Calu3 (cell line): ENCODE measurements at regions of chr5 and their contacts with region 1.

Region 1: GRCh38 chr5:151924564-151925301 is at the start of gene GLRA1:
- DNase-seq: peak; percentile 49
- H3K4me3 Mint-ChIP-seq: no peak within 1 kb of the TSS
- H3K27ac Mint-ChIP-seq: no peak within 1 kb of the TSS
- H3K4me1 Mint-ChIP-seq: no peaks in the 10 kb centered on the region
- H3K27me3 Mint-ChIP-seq: peaks cover 52% of the 10 kb centered on the region
- CTCF ChIP-seq: no peak
- total RNA-seq, gene GLRA1: not detected in 2 replicates

Region 2: DNA sequence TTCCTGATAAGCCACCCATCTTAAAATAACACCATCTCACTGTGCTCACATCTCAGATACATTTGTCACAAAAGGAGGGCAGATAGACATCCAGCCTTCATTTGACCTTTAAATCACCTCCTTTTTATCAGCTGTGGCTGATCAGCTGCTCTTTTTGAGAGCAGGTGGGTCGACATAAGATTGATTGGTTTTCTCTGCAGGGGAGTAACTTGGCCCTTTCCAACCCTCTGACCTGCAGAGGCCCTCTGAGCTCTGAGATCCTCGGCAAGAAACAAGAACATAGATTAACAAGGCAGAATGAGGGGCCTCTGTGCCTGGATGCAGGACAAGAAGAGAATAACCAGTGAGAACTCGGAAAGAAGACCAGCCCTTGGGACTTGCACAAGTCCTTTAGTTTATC is 33.4 kb after region 1 on chr5:
- CTCF ChIA-PET with region 1: no interaction called
- intact Hi-C with region 1: loop called (anchors 2 kb)
- DNase-seq: no peak
- H3K4me3 Mint-ChIP-seq: no peak overlapping the region
- H3K27ac Mint-ChIP-seq: no peak overlapping the region
- H3K4me1 Mint-ChIP-seq: no peaks in the 10 kb centered on the region
- H3K27me3 Mint-ChIP-seq: peaks cover 46% of the 10 kb centered on the region
- CTCF ChIP-seq: no peak

Region 3: DNA sequence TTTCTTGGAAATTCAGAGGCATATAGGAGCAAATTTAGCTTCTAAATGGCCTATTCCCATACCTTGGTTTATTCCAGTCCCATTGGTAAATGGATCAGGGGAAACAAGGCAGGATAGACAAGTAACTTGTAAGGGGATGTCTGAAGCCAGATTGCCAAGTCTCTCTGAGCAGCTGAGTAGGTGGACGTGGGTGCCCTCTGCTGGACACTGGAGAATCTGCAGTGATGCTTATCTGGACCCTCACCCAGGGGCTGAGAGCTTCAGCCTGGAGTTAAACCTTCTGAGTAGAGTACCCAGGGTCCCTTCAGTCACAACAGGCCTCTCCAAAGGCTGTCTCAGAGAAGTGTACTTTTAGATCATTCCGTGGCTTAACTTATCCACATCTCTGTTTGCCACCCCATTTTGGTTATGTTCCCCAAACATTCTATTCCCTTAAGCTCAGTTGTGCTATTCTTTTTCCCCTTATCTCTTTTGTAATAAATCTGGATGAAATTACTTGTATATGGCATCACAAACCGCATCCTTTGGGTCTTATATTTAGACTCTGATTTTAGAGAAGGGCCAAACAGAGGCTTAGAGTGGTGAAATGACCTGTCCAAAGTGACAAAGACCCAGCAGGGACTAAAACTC is 218.2 kb after region 1 on chr5:
- CTCF ChIA-PET with region 1: interaction called, 4 read pairs
- intact Hi-C with region 1: loop called (anchors 2 kb)
- DNase-seq: peak; percentile 76
- H3K4me3 Mint-ChIP-seq: no peak overlapping the region
- H3K27ac Mint-ChIP-seq: no peak overlapping the region
- H3K4me1 Mint-ChIP-seq: no peaks in the 10 kb centered on the region
- H3K27me3 Mint-ChIP-seq: peaks cover 24% of the 10 kb centered on the region
- CTCF ChIP-seq: peak; percentile 87